Activated CD8-positive, alpha-beta memory T cell treated with anti-CD3 and anti-CD28 coated beads, Interleukin-2, amount 10 ng/mL, durations not matched to agents 7 days and 5 days (primary cell): ENCODE measurements at regions of chr16 and their contacts with region 1.

Region 1: DNA sequence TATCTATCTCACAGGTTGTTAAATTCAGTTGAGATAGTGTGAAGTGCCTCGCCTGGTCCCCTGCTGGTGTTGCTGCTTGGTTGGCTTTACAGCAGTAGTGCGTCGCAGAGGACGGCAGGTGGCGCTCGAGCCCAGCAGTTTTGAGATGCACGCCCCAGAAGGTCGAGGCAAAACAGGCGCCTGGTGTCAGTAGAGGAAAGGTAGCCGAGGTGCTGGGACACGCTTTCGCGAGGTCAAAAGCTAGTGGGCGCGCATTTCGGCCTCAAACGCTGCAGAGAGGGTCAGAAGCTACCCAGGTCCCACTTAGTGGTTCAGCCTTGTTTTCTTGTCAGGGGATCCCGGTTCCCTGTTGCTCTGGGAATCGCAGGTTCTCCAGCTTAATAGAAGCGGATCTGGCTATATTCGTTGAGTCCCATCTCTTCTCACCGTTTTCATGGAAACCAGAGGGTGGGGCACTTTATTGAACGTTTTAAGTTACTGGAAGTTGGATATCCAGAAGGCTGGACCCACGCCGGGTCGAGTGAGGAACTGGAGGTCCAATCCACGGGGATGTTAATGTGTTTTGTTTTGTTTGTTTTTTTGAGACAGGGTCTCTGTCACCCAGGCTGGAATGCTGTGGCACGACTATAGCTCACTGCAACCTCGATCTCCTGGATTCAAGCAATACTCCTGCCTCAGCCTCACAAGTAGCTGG is 10.3 kb upstream of the ZFP90 start:
- DNase-seq: peak; percentile 91
- ATAC-seq: peak; percentile 82
- H3K4me3 Mint-ChIP-seq: peak overlapping the region; percentile 77
- H3K27ac Mint-ChIP-seq: no peak overlapping the region
- H3K4me1 Mint-ChIP-seq: peaks cover 22% of the 10 kb centered on the region
- H3K27me3 Mint-ChIP-seq: no peaks in the 10 kb centered on the region

Region 2: GRCh38 chr16:68059804-68060203 is 469.0 kb before region 1 on chr16:
- CTCF ChIA-PET with region 1: no interaction called
- DNase-seq: no peak
- ATAC-seq: peak; percentile 12
- H3K4me3 Mint-ChIP-seq: peak overlapping the region; percentile 33
- H3K27ac Mint-ChIP-seq: peak overlapping the region; percentile 87
- H3K4me1 Mint-ChIP-seq: peaks cover 62% of the 10 kb centered on the region
- H3K27me3 Mint-ChIP-seq: no peaks in the 10 kb centered on the region

Region 3: GRCh38 chr16:68356249-68356918 is 172.4 kb before region 1 on chr16:
- CTCF ChIA-PET with region 1: no interaction called
- DNase-seq: peak; percentile 95
- ATAC-seq: peak; percentile 84
- H3K4me3 Mint-ChIP-seq: peak overlapping the region; percentile 32
- H3K27ac Mint-ChIP-seq: peak overlapping the region; percentile 69
- H3K4me1 Mint-ChIP-seq: peaks cover 37% of the 10 kb centered on the region
- H3K27me3 Mint-ChIP-seq: no peaks in the 10 kb centered on the region

Region 4: GRCh38 chr16:68538880-68539701 is 10.3 kb after region 1 on chr16 and contains the start of gene ZFP90:
- CTCF ChIA-PET with region 1: interaction called, 38 read pairs
- DNase-seq: peak; percentile 91
- ATAC-seq: peak; percentile 97
- H3K4me3 Mint-ChIP-seq: peak within 1 kb of the TSS; percentile 100
- H3K27ac Mint-ChIP-seq: peak within 1 kb of the TSS; percentile 99
- H3K4me1 Mint-ChIP-seq: peaks cover 16% of the 10 kb centered on the region
- H3K27me3 Mint-ChIP-seq: no peaks in the 10 kb centered on the region
- total RNA-seq, gene ZFP90: 28.8 to 32.1 TPM

Region 5: GRCh38 chr16:68590201-68590994 is 61.6 kb after region 1 on chr16:
- CTCF ChIA-PET with region 1: interaction called, 38 read pairs
- DNase-seq: peak; percentile 67
- ATAC-seq: peak; percentile 74
- H3K4me3 Mint-ChIP-seq: no peak overlapping the region
- H3K27ac Mint-ChIP-seq: no peak overlapping the region
- H3K4me1 Mint-ChIP-seq: peaks cover 2% of the 10 kb centered on the region
- H3K27me3 Mint-ChIP-seq: peaks cover 2% of the 10 kb centered on the region